ENCODE measurements at regions of chr3 and their contacts with region 1.

Region 1: DNA sequence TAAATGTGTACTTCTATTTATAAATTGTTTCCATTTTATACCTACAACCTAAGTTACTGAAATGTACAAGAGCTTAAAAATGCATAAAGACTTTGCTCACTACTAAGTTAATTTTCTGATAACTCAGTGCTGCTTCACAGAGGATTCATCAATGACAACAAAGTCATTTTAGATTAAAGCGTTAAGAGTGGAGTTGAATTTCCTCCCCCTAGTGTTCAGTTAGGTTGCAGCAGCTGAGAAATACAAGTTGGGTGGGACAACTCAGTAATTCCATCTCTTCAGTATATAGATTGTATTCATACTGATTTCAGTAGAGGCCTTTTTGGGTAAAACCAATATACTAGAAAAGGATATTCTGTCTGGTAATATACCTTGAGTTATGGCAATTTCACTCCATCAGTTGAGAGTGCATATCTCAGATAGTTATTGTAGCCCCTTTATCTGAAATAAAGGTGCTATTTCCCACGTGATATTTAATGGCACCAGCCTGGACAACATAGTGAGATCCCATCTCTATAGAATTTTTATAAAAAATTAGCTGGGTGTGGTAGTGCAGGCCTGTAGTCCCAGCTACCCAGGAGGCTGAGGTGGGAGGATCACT is 6.9 kb upstream of the RPL35A start:
- DNase-seq: peak; percentile 46
- ATAC-seq: peak; percentile 92
- H3K4me3 Mint-ChIP-seq: no peak overlapping the region
- H3K27ac Mint-ChIP-seq: no peak overlapping the region
- H3K4me1 Mint-ChIP-seq: peaks cover 4% of the 10 kb centered on the region
- H3K27me3 Mint-ChIP-seq: no peaks in the 10 kb centered on the region
- CTCF ChIP-seq: peak; percentile 91

Region 2: GRCh38 chr3:197501879-197502620 is 441.0 kb before region 1 on chr3:
- CTCF ChIA-PET with region 1: no interaction called
- POLR2A ChIA-PET with region 1: no interaction called
- intact Hi-C with region 1: no loop called
- DNase-seq: peak; percentile 74
- ATAC-seq: peak; percentile 88
- H3K4me3 Mint-ChIP-seq: no peak overlapping the region
- H3K27ac Mint-ChIP-seq: no peak overlapping the region
- H3K4me1 Mint-ChIP-seq: no peaks in the 10 kb centered on the region
- H3K27me3 Mint-ChIP-seq: no peaks in the 10 kb centered on the region
- CTCF ChIP-seq: peak; percentile 67

Region 3: DNA sequence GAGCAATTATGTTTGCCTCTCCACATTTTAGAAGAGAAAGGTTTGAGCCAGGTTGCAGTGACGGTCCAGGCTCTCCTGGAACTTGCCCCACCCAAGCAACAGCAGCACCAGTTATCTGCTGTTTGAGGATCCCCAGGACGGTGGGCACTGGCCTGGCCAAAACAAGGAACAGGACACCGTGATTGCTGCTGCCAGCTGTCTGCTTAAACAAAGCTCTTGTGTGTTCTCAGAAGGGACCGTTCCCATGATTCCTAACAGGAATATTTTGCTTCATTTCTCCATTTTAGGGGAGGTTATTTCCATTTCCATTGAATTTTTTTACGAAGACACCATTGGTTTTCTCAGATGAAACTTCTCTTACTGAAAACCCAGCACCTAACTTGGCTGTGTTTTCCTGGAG is 59.5 kb before region 1 on chr3:
- CTCF ChIA-PET with region 1: no interaction called
- POLR2A ChIA-PET with region 1: no interaction called
- intact Hi-C with region 1: no loop called
- DNase-seq: no peak
- ATAC-seq: no peak
- H3K4me3 Mint-ChIP-seq: no peak overlapping the region
- H3K27ac Mint-ChIP-seq: no peak overlapping the region
- H3K4me1 Mint-ChIP-seq: peaks cover 19% of the 10 kb centered on the region
- H3K27me3 Mint-ChIP-seq: no peaks in the 10 kb centered on the region
- CTCF ChIP-seq: no peak

Region 4: GRCh38 chr3:197912770-197913476 is 30.1 kb before region 1 on chr3:
- CTCF ChIA-PET with region 1: interaction called, 18 read pairs
- POLR2A ChIA-PET with region 1: interaction called, 3 read pairs
- intact Hi-C with region 1: loop called (anchors 5 kb)
- DNase-seq: peak; percentile 8
- ATAC-seq: peak; percentile 62
- H3K4me3 Mint-ChIP-seq: peak overlapping the region; percentile 56
- H3K27ac Mint-ChIP-seq: peak overlapping the region; percentile 22
- H3K4me1 Mint-ChIP-seq: peaks cover 3% of the 10 kb centered on the region
- H3K27me3 Mint-ChIP-seq: no peaks in the 10 kb centered on the region
- CTCF ChIP-seq: no peak

Region 5: DNA sequence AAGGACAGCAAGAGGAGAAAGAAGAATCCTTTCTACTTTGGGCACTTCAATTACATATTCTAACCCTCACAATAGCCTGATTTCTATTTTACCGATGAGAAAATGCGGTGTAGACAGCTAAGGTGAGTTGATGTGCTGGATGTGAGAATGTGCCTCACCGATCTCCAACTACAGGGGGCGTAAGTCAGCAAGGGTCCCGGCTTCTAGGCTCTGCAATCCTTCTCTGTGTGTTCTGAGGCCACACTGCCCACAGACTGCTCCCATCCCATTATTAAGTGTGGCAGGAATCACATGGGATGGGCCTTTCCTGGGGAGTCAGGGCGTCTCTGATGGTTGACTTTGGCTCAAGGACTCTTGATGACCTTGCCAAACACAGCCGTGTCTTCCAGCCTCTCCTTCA is 16.6 kb before region 1 on chr3:
- CTCF ChIA-PET with region 1: interaction called, 10 read pairs
- POLR2A ChIA-PET with region 1: no interaction called
- intact Hi-C with region 1: no loop called
- DNase-seq: peak; percentile 31
- ATAC-seq: no peak
- H3K4me3 Mint-ChIP-seq: no peak overlapping the region
- H3K27ac Mint-ChIP-seq: no peak overlapping the region
- H3K4me1 Mint-ChIP-seq: peaks cover 5% of the 10 kb centered on the region
- H3K27me3 Mint-ChIP-seq: no peaks in the 10 kb centered on the region
- CTCF ChIP-seq: peak; percentile 38

Region 6: DNA sequence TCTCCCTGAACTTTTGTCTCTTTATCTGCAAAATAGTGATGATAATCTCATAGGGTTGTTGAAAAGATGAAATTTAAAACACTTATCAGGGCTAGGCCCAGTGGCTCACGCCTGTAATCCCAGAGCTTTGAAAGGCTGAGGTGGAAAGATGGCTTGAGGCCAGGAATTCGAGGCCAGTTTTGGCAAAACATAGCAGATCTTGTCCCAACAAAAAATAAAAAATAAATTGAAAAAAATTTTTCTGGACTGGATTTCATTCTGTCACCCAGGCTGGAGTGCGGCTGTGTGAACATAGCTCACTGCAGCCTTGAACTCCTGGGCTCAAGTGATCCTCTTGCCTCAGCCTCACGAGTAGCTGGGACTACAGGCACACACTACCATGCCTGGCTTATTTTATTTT is 46.6 kb after region 1 on chr3:
- CTCF ChIA-PET with region 1: no interaction called
- POLR2A ChIA-PET with region 1: no interaction called
- intact Hi-C with region 1: no loop called
- DNase-seq: no peak
- ATAC-seq: no peak
- H3K4me3 Mint-ChIP-seq: no peak overlapping the region
- H3K27ac Mint-ChIP-seq: no peak overlapping the region
- H3K4me1 Mint-ChIP-seq: no peaks in the 10 kb centered on the region
- H3K27me3 Mint-ChIP-seq: no peaks in the 10 kb centered on the region
- CTCF ChIP-seq: no peak

Measured in activated CD8-positive, alpha-beta T cell treated with anti-CD3 and anti-CD28 coated beads for 36 hours (primary cell).